ENCODE measurements at regions of chr12 and their contacts with region 1.

Region 1: DNA sequence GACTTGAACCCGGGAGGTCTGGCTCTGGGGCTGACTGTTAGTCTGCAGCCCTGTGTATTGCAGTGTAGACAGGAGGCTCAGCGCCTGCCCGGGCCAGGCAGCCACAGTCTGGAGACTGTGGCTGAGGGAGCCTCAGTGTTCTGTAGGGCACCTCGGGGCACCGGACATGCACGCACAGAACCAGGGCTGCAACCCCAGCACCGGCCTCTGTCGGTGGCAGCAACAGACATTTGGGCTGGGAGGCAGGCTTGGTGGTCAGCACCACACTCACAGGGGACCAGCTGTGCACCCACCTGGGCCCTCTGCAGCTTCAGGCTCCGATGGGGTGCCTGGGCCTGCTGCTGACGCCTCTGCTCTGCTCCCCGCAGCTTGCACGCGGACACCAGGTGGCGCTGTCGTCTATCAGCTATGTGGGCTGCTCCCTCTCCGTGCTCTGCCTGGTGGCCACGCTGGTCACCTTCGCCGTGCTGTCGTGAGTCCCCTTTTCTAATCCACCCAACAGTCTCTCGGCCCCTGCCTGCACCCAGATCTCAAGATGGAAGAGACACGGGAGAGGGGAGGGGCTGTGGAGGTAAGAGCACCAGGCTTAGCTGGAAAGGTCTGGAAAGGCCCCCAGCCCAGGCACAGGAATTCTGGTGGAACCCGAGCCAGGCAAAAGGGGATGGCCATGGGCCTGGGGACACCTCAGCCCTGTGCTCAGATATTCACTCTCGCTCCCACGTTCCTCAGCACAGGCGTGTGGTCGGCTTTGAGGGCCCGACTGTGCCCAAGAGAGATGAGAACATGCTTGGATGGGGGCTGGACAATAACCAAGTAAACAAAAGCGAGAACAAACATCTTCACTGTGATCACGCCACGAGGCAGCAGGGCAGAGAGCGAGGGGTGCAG is 151.0 kb downstream of the ADGRD1 start:
- DNase-seq: peak; percentile 48 to 57
- ATAC-seq: peak; percentile 77 to 86
- H3K4me3 ChIP-seq: no peak overlapping the region
- H3K27ac ChIP-seq: no peak overlapping the region
- H3K4me1 ChIP-seq: peaks cover 3 to 5% of the 10 kb centered on the region in 2 donors
- H3K27me3 ChIP-seq: no peaks in the 10 kb centered on the region
- CTCF ChIP-seq: peak; percentile 70 to 84 (median 81)
- POLR2A ChIP-seq: no peak

Region 2: DNA sequence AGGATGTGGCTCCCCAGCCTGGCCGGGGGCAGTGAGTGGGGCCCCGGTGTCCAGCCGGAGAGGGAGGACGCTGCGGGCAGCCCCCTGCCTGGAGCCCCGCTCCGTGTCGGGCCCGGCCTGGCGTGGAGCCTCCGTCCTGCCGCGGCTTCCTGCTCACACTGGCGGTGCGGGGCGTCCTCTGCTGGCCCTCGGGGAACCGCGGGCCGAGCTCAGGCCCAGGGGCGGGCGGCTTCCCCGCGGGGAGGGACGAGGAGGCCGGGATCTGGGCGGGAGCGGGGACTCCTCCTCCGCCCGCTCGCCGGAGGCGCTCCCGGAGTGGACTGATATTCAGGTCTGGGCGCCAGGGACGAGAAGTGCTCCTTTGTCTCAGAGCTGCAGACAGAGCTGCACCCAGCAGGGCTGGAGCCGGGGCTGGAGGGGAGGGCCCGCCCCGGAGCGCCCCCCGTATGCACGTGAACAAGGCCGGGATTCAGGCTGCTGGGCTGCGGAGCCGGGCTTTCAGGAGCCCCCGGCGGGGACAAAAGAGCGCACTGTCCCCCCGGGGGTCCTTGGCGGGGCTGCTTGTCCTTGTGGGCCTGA is 725.7 kb after region 1 on chr12:
- in situ Hi-C with region 1: no loop called
- intact Hi-C with region 1: loop called (anchors 10 kb)
- DNase-seq: peak; percentile 42 to 61
- ATAC-seq: peak; percentile 46 to 65
- H3K4me3 ChIP-seq: peak overlapping the region; percentile 50 to 54 (median 52)
- H3K27ac ChIP-seq: peak overlapping the region in 3 of 4 donors; percentile 49 to 55 (median 52)
- H3K4me1 ChIP-seq: peaks cover 11 to 33% of the 10 kb centered on the region in 2 donors
- H3K27me3 ChIP-seq: peaks cover 59 to 78% (median 75%) of the 10 kb centered on the region in 3 donors
- CTCF ChIP-seq: peak; percentile 28 to 61 (median 51)
- POLR2A ChIP-seq: peak in 1 of 2 donors; percentile 21

Region 3: GRCh38 chr12:131980260-131980659 is 875.6 kb after region 1 on chr12:
- in situ Hi-C with region 1: loop called in 1 of 4 experiments (anchors 25 kb)
- intact Hi-C with region 1: no loop called
- DNase-seq: no peak
- ATAC-seq: no peak
- H3K4me3 ChIP-seq: no peak overlapping the region
- H3K27ac ChIP-seq: no peak overlapping the region
- H3K4me1 ChIP-seq: no peaks in the 10 kb centered on the region
- H3K27me3 ChIP-seq: no peaks in the 10 kb centered on the region
- CTCF ChIP-seq: no peak
- POLR2A ChIP-seq: no peak